ENCODE measurements at regions of chr1 and their contacts with region 1.

Region 1: DNA sequence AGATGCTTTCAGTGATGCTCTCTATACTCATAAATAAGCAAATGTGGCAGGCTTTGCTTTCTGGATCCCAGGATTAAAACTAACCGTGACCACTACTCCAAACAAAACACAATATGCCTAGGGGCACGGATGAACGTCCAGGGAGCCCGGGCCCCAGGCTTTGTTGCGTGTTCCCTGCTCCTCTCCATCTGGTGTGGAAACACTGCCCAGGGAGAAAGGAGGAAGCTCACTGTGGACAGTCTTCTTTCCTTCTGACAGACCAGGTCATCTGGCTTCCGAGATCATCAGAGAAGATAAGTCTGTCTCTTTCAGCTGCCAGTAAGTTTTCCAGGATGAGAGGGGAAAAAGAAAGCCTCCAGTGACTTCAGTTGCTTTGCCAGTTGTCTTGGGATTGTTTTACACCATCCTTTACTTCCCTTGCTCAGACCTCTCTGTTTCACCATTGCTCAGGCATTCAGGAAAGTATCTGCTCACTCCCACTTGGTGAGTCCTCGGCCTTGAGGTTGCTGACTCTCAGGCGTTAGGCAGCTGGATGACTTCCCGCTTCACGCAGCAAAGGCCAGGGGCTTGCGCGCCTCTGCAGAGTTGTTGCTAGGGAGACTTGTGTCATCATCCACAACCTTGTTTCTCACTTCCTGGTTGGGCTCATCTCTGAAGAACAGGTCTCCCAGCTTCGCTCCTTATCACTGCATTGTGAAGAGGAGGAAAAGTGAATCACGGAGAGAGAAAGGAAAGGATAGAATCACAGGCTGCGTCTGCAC is 20.6 kb upstream of the PGD start:
- DNase-seq: peak; percentile 63
- H3K4me3 ChIP-seq: no peak overlapping the region
- CTCF ChIP-seq: no peak

Region 2: GRCh38 chr1:10057343-10057742 is 320.9 kb before region 1 on chr1:
- CTCF ChIA-PET with region 1: no interaction called
- POLR2A ChIA-PET with region 1: no interaction called
- DNase-seq: no peak
- H3K4me3 ChIP-seq: no peak overlapping the region
- CTCF ChIP-seq: no peak

Region 3: GRCh38 chr1:10267319-10267718 is 110.9 kb before region 1 on chr1:
- CTCF ChIA-PET with region 1: no interaction called
- POLR2A ChIA-PET with region 1: no interaction called
- DNase-seq: no peak
- H3K4me3 ChIP-seq: no peak overlapping the region
- CTCF ChIP-seq: no peak

Region 4: GRCh38 chr1:10368194-10368593 is 10.1 kb before region 1 on chr1:
- CTCF ChIA-PET with region 1: interaction called, 22 read pairs
- POLR2A ChIA-PET with region 1: no interaction called
- DNase-seq: no peak
- H3K4me3 ChIP-seq: no peak overlapping the region
- CTCF ChIP-seq: no peak

Region 5: GRCh38 chr1:10398734-10399623 is 20.7 kb after region 1 on chr1 and contains the start of gene PGD:
- CTCF ChIA-PET with region 1: interaction called, 25 read pairs
- POLR2A ChIA-PET with region 1: no interaction called
- DNase-seq: peak; percentile 85
- H3K4me3 ChIP-seq: peak within 1 kb of the TSS; percentile 90
- CTCF ChIP-seq: peak; percentile 2

Region 6: GRCh38 chr1:10415211-10415930 is 37.1 kb after region 1 on chr1:
- CTCF ChIA-PET with region 1: interaction called, 12 read pairs
- POLR2A ChIA-PET with region 1: interaction called, 3 read pairs
- DNase-seq: peak; percentile 65
- H3K4me3 ChIP-seq: no peak overlapping the region
- CTCF ChIP-seq: no peak

Region 7: GRCh38 chr1:10424034-10424433 is 45.8 kb after region 1 on chr1:
- CTCF ChIA-PET with region 1: interaction called, 164 read pairs
- POLR2A ChIA-PET with region 1: interaction called, 3 read pairs
- DNase-seq: no peak
- H3K4me3 ChIP-seq: no peak overlapping the region
- CTCF ChIP-seq: no peak

Measured in AG04449 (cell line).